HEK293 (cell line): ENCODE measurements at regions of chr9 and their contacts with region 1.

Region 1: GRCh38 chr9:20941174-20941690 is 90.2 kb downstream of the HACD4 start:
- H3K4me3 ChIP-seq: no peak overlapping the region
- H3K27ac ChIP-seq: no peak overlapping the region
- H3K4me1 ChIP-seq: no peaks in the 10 kb centered on the region
- CTCF ChIP-seq: 0 out of 2 replicates have a peak, but pooled peaks have one; percentile 39

Region 2: GRCh38 chr9:19925817-19926503 is 1015.3 kb before region 1 on chr9:
- CTCF ChIA-PET with region 1: interaction called, 13 read pairs
- POLR2A ChIA-PET with region 1: no interaction called
- H3K4me3 ChIP-seq: peak overlapping the region; percentile 28
- H3K27ac ChIP-seq: no peak overlapping the region
- H3K4me1 ChIP-seq: no peaks in the 10 kb centered on the region
- CTCF ChIP-seq: peak; percentile 88

Region 3: GRCh38 chr9:20356403-20357035 is 584.7 kb before region 1 on chr9:
- CTCF ChIA-PET with region 1: interaction called, 24 read pairs
- POLR2A ChIA-PET with region 1: no interaction called
- H3K4me3 ChIP-seq: peak overlapping the region; percentile 8; the same call in 1 of the 2 replicates
- H3K27ac ChIP-seq: peak overlapping the region; percentile 78
- H3K4me1 ChIP-seq: peaks cover 11% of the 10 kb centered on the region
- CTCF ChIP-seq: peak; percentile 84

Region 4: GRCh38 chr9:20518735-20519134 is 422.5 kb before region 1 on chr9:
- CTCF ChIA-PET with region 1: no interaction called
- POLR2A ChIA-PET with region 1: no interaction called
- H3K4me3 ChIP-seq: no peak overlapping the region
- H3K27ac ChIP-seq: no peak overlapping the region
- H3K4me1 ChIP-seq: no peaks in the 10 kb centered on the region
- CTCF ChIP-seq: no peak

Region 5: GRCh38 chr9:20884985-20885593 is 56.1 kb before region 1 on chr9:
- CTCF ChIA-PET with region 1: interaction called, 10 read pairs
- POLR2A ChIA-PET with region 1: no interaction called
- H3K4me3 ChIP-seq: no peak overlapping the region
- H3K27ac ChIP-seq: no peak overlapping the region
- H3K4me1 ChIP-seq: no peaks in the 10 kb centered on the region
- CTCF ChIP-seq: no peak

Region 6: DNA sequence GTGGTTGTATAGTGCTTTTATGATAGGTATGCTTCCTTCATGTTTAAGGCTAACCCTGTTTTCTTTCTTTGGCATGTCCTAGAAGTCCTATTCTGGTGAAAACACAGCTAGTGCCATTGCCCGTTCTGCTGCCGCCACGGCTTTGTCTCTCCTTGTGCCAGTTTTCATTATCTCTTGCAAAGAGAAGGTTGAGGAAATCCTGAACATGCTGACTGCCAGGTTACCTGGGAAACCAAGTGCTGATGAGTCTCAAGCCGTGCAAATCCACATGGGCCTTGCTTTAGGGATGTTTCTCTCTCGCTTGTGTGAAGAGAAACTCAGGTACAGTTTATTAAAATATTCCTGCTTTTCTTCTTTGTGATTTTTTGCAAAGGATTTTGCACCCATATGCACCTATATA is 12.0 kb before region 1 on chr9:
- CTCF ChIA-PET with region 1: interaction called, 10 read pairs
- POLR2A ChIA-PET with region 1: no interaction called
- H3K4me3 ChIP-seq: no peak overlapping the region
- H3K27ac ChIP-seq: no peak overlapping the region
- H3K4me1 ChIP-seq: no peaks in the 10 kb centered on the region
- CTCF ChIP-seq: no peak

Region 7: GRCh38 chr9:21110708-21111576 is 169.7 kb after region 1 on chr9:
- CTCF ChIA-PET with region 1: interaction called, 25 read pairs
- POLR2A ChIA-PET with region 1: no interaction called
- H3K4me3 ChIP-seq: no peak overlapping the region
- H3K27ac ChIP-seq: no peak overlapping the region
- H3K4me1 ChIP-seq: no peaks in the 10 kb centered on the region
- CTCF ChIP-seq: peak; percentile 65